Activated CD4-positive, alpha-beta memory T cell treated with anti-CD3 and anti-CD28 coated beads for 36 hours (primary cell): ENCODE measurements at regions of chr1 and their contacts with region 1.

Region 1: GRCh38 chr1:228464487-228464983 is 22.6 kb upstream of the RNF187 start:
- DNase-seq: peak; percentile 96
- H3K4me3 Mint-ChIP-seq: peak overlapping the region; percentile 87
- H3K27ac Mint-ChIP-seq: peak overlapping the region; percentile 96
- H3K4me1 Mint-ChIP-seq: peaks cover 46% of the 10 kb centered on the region
- H3K27me3 Mint-ChIP-seq: no peaks in the 10 kb centered on the region

Region 2: DNA sequence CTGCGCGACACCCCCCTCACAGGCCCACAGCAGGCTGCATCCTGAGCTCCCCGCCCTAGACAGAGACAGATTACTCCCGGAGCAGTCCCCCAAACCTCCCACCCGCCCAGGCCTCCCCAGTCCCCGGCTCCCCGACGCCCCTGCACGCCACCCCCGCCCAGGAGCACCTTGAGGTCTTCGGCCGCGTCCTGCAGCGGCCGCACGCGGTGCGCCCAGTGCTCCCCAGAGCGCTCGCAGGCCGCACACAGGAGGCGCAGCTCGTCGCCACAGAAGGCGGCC is 58.6 kb before region 1 on chr1:
- CTCF ChIA-PET with region 1: interaction called, 9 read pairs
- POLR2A ChIA-PET with region 1: interaction called, 18 read pairs
- intact Hi-C with region 1: loop called (anchors 1 kb)
- DNase-seq: no peak
- H3K4me3 Mint-ChIP-seq: peak overlapping the region; percentile 83
- H3K27ac Mint-ChIP-seq: peak overlapping the region; percentile 71
- H3K4me1 Mint-ChIP-seq: peaks cover 43% of the 10 kb centered on the region
- H3K27me3 Mint-ChIP-seq: no peaks in the 10 kb centered on the region

Region 3: DNA sequence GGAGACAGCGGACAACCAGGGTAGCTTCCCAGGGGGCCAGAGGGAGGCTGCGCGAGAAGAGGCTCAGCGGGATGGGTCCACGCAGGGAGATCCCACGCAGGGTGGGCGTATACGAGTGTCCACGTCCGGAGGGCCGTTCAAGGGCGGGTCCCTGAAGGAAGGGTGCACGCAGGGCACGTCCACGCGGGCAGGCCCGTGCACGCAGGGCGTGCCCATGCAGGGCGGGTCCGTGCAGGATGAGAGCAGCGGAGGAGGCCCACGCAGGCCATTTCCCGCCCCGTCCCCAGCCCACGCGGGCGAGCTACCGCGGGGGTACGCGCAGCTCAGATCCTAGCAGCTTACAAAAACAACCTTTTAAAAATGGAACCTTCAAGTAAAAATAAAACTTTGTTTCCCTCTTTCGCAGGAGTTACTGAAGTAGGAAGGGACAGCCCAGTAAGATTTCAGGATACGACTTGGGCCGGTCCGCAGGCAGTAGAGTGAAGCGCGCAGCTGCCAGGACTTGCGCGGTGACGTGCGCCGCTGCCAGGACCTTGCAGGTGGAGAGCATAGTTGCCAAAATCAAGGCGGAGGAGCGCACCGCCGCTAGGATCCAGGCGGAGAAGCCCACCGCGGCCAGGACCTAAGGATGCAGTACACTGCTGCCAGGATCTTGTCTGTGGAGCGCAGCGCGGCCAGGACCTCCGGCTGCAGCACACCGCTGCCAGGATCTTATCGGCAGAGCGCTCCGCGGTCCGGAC is 22.2 kb after region 1 on chr1:
- CTCF ChIA-PET with region 1: interaction called, 22 read pairs
- POLR2A ChIA-PET with region 1: interaction called, 20 read pairs
- intact Hi-C with region 1: loop called (anchors 1 kb)
- DNase-seq: peak; percentile 85
- H3K4me3 Mint-ChIP-seq: peak overlapping the region; percentile 96
- H3K27ac Mint-ChIP-seq: peak overlapping the region; percentile 99
- H3K4me1 Mint-ChIP-seq: peaks cover 41% of the 10 kb centered on the region
- H3K27me3 Mint-ChIP-seq: no peaks in the 10 kb centered on the region